ENCODE measurements at regions of chr10 and their contacts with region 1.

Region 1: GRCh38 chr10:117699436-117700075 is 157.0 kb downstream of the EMX2 start:
- DNase-seq: no peak
- H3K4me3 Mint-ChIP-seq: no peak overlapping the region
- H3K27ac Mint-ChIP-seq: no peak overlapping the region
- H3K4me1 Mint-ChIP-seq: no peaks in the 10 kb centered on the region
- H3K27me3 Mint-ChIP-seq: peaks cover 4% of the 10 kb centered on the region

Region 2: GRCh38 chr10:117568334-117568733 is 131.2 kb before region 1 on chr10:
- intact Hi-C with region 1: loop called (anchors 10 kb)
- DNase-seq: no peak
- H3K4me3 Mint-ChIP-seq: no peak overlapping the region
- H3K27ac Mint-ChIP-seq: no peak overlapping the region
- H3K4me1 Mint-ChIP-seq: no peaks in the 10 kb centered on the region
- H3K27me3 Mint-ChIP-seq: peaks cover 2% of the 10 kb centered on the region

Region 3: DNA sequence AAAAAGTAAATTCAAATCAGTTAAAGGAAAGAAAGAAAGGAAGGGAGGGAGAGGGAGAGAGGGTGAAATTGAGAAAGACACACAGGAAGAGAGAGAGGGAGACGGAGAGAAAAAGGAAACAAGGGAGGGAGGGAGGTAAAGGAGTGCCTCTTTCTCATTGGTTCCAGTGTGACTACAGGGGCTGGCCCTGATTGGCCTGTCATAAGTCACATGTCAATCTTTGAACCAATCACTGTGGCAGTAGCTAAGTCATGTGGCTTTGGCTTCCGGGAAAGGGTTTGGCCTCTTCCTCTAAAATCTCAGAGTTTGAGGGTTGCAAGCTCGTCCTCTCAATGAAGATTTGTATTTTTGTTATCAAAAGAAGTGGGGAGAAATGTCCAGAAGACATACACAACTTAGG is 197.0 kb after region 1 on chr10:
- intact Hi-C with region 1: no loop called
- DNase-seq: no peak
- H3K4me3 Mint-ChIP-seq: no peak overlapping the region
- H3K27ac Mint-ChIP-seq: no peak overlapping the region
- H3K4me1 Mint-ChIP-seq: peaks cover 6% of the 10 kb centered on the region
- H3K27me3 Mint-ChIP-seq: peaks cover 2% of the 10 kb centered on the region

Measured in activated CD4-positive, alpha-beta T cell treated with anti-CD3 and anti-CD28 coated beads, Interleukin-2, amount 10 ng/mL, durations not matched to agents 24 days and 14 days (primary cell).